Posterior cingulate gyrus (tissue), 11 donors: ENCODE measurements at regions of chr17 and their contacts with region 1.

Region 1: DNA sequence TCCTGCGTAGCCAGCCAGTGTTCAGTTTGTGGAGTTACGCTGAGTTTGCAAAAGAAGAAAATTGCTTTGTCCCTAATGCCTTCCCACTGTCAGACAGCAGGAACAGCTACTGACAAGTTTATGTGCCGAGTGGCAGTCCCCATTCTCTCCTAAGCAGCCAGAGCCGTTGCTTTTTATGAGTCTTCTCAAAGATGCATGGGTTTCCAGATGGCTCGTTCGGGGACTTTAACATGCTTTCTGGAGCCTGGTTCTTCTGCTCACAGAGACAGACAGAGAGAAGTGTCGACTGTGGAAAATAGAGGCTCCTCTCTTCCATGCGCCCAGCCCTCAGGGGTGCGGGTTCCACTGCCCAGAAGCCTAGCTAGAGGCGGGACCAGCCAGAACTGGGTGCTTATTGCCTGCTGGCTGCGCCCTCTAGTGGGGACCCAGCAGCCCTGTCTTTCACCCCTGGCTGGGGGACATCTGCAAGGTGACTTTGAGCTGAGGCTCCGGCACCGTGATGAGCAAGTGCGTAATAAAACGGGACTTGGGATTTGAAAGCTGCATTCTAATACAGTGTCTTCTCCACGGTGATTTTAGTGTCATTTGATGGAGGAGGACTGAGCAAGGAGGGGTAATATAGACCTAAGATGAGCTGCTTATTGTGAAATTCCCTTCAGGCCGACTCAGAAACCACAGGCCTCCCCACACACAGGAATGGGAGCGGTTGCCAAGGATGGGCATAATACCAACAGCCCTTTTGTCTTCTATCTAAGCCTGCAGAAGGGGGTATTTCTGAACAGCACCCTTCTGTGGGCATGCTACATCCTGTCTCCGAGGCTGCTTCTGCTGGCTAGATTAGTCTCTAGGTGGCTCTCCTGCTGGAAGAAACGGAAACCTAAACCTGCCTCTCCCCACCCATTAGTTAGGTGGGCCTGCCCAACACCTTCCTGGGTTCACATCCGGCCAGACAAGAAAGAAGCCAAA is 73.1 kb downstream of the CCDC182 start:
- DNase-seq: peak; percentile 70 to 97 (median 85)

Region 2: DNA sequence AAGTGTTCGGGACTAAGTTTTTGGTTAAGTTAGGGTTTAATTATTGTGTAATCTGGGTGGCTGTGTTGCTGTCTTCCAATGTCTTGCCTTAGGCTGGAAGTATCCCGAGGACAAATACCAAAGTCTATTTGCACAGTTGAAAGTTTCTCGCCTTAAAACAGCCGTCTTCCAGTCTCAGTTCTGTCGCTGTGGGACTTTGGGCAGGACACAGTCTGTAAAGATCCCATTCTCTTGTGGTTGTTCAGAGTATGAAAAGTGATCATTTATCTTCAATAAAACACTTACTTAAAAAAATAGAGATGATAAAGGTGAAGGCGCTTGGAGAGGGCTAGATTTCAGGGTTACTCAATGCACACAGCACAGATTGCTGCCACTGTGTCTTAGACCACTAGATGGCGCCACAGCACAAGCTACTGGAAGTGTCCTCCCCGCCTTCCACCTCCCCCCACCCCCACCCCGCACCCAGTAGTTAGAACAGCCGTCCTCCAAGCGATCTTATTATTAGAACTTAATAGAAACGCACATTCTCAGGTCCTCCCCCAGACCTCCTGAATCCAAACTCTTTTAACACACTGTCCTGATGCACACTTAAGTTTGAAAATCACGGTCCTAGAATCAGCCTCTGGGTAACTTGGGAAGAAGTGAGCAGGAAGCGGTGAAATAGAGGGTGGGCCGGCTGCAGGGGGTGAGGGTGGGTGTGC is 541.0 kb before region 1 on chr17:
- intact Hi-C with region 1: loop called (anchors 5 kb)
- DNase-seq: peak; percentile 70 to 96 (median 86)

Region 3: GRCh38 chr17:57243171-57243948 is 428.6 kb before region 1 on chr17:
- intact Hi-C with region 1: loop called (anchors 5 kb)
- DNase-seq: peak in 7 of 10 donors; percentile 31 to 84 (median 68)

Region 4: DNA sequence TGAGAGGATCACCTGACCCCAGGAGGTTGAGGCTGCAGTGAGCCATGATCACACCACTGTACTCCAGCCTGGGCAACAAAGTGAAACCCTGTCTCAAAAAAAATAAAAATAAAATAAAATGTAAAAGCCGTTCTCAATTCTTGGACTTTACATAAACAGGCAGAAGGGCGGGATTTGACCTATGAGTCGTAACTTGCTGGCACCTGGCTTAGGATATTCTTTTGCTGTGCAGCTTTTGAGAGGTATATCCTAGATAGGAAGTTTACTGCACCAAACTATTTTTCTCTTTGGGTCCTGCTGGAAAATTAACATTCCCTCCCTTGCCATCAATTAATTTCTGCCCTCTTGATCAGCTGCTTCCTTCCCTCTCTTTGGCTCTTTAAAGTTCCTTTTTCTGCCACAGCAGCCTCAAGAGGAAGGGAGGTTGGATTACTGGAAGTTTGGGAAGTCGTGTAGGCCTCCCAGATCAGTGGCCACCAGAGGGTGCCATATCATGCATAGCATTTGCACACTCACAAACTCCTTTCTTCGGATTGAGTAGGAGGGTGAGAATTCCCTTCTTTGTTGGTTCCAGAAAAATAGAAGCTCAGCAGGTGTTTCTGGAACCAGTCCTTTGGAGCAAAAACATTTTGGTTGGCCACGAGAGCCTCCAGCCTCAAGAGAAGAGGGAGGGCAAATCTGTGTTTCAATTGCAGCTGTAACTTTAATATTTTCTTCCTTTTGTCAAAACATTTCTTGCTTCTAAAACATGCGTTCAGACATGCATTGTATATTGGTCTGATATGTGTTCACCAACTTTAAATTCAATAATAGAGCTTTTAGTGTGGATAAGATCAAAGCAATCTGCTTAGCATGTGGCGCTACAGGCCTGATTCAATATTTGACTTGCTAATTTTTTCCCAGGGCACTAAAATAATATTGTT is 74.2 kb before region 1 on chr17:
- intact Hi-C with region 1: loop called (anchors 2 kb)
- DNase-seq: peak in 9 of 10 donors; percentile 51 to 96 (median 78)

Region 5: GRCh38 chr17:57603978-57604377 is 68.0 kb before region 1 on chr17:
- intact Hi-C with region 1: loop called (anchors 1 kb)
- DNase-seq: peak in 1 of 10 donors; percentile 34

Region 6: GRCh38 chr17:57622683-57623433 is 49.1 kb before region 1 on chr17:
- intact Hi-C with region 1: no loop called
- DNase-seq: peak in 2 of 10 donors; percentile 52 to 63